GM13977 (cell line): ENCODE measurements at regions of chr11 and their contacts with region 1.

Region 1: DNA sequence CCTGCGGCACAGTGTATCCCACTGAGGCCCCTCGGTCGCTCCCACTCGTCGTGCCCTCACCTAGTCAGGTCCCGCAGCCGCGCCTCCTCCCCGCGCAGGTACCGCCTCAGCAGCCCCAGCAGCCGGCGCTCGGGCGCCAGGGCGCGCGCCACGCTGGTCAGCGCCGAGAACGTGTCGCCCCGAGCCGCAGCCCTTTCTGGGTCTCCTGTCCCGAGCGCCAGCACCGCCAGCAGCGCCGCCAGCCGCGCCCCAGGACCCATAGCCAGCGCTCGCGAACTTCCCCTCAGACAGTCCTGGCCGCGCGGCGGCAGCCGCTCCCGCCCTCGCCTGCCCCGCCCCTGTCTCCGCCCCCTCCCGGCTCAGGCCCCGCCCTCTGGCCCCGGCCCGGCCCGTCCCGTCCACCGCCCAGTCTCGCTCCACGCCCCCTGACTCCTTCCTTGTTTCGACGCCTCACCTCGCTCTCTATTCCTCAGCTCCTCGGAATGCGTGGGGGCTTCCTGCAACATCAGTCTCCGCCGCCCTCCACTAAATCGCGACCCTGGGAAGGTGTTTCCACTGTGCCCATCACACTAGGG is at the start of gene P4HA3:
- DNase-seq: peak; percentile 73
- CTCF ChIP-seq: no peak

Region 2: GRCh38 chr11:73950869-73951710 is 360.3 kb before region 1 on chr11 and contains the start of gene DNAJB13:
- in situ Hi-C with region 1: loop called (anchors 25 kb)
- DNase-seq: peak; percentile 83
- CTCF ChIP-seq: no peak